Activated CD4-positive, alpha-beta memory T cell treated with anti-CD3 and anti-CD28 coated beads for 36 hours (primary cell): ENCODE measurements at regions of chr14 and their contacts with region 1.

Region 1: DNA sequence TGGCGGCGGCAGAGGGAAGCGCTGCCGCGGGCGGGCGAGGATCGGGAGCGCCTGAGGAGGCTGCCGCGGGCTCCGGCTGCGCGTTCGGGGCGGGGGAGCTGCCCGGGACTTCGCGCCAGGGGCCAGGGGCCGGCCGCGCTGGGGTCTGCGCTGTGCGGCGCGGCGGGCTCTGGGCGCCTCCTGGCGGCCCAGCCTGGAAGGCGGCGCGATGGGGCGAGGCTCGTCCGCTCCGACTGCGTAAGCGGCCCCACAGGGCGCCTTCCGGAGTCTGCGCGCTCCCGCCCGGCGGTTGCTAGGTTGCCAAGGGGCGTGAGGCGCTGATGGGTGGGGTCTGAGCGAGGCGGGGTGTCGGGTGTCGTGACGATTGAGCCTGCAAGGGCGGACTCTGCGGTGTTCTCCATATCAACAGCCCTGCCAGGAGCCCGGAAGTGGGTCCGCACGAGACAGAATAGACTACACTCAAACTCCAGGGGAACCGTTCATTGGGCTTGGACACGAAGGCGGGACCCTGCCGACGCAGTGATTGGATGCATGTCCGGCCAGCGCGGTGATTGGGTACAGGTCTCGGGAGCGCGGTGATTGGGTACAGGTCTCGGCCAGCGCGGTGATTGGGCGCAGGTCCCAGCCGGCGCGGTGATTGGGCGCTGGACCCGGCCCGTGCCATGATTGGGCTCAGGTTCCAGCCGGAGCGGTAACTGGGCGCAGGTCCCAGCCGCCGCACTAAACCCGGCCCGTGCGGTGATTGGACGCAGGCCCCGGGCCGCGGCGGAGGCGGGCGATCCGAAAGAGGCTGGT is at the start of gene TEDC1:
- DNase-seq: peak; percentile 100
- H3K4me3 Mint-ChIP-seq: peak within 1 kb of the TSS; percentile 82
- H3K27ac Mint-ChIP-seq: peak within 1 kb of the TSS; percentile 91
- H3K4me1 Mint-ChIP-seq: peaks cover 20% of the 10 kb centered on the region
- H3K27me3 Mint-ChIP-seq: no peaks in the 10 kb centered on the region
- total RNA-seq, gene TEDC1: 40.2 to 44.8 TPM

Region 2: DNA sequence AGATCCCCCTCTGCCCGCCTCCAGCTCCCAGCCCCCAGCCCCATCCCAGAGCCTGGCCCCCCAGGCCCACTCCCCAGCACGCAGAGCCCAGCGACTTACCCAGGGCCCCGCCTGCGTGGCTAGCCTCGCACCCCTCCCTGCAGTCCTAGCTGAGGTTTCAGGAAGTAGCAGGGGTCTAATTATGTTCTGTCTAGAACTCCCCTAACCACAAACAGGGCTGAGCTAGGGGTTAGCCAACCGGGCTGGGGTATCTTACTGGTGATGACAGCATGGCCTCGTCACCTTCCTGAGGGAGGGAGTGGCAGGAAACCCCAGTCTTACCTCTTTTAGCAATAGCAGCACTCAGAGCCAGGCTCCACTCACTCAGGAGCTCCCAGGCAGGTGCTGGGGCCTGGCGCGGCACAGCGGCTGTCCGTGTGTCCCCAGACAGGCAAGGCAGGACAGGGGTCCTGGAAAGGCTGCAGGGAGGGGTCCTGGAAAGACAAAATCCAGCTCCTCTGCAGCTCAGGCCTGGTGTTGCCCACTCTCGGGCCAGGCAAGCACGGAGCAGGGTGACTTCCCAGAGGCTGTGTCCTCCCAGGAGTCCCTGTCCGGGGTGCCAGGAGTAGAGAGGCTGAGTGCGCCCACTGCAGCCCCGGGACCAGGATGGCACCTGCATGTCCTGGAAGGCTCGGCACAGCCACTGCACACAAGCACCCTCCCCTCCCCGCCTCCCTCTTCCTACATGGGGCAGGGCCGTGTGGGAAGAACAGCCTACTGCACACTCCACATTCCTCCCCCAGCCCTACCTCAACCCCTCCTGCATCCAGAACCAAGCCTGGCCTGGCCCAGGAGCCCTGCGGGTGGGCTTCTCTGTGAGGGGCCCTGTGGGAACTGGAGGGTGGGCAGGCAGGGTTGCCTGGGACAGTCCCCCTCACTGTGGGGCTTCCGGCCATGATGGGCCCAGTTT is 425.2 kb before region 1 on chr14 and contains the start of gene GPR132:
- CTCF ChIA-PET with region 1: no interaction called
- POLR2A ChIA-PET with region 1: no interaction called
- intact Hi-C with region 1: loop called (anchors 2 kb)
- DNase-seq: peak; percentile 95
- H3K4me3 Mint-ChIP-seq: peak within 1 kb of the TSS; percentile 94
- H3K27ac Mint-ChIP-seq: peak within 1 kb of the TSS; percentile 86
- H3K4me1 Mint-ChIP-seq: peaks cover 70% of the 10 kb centered on the region
- H3K27me3 Mint-ChIP-seq: no peaks in the 10 kb centered on the region
- total RNA-seq, gene GPR132: 33.4 to 34.2 TPM

Region 3: DNA sequence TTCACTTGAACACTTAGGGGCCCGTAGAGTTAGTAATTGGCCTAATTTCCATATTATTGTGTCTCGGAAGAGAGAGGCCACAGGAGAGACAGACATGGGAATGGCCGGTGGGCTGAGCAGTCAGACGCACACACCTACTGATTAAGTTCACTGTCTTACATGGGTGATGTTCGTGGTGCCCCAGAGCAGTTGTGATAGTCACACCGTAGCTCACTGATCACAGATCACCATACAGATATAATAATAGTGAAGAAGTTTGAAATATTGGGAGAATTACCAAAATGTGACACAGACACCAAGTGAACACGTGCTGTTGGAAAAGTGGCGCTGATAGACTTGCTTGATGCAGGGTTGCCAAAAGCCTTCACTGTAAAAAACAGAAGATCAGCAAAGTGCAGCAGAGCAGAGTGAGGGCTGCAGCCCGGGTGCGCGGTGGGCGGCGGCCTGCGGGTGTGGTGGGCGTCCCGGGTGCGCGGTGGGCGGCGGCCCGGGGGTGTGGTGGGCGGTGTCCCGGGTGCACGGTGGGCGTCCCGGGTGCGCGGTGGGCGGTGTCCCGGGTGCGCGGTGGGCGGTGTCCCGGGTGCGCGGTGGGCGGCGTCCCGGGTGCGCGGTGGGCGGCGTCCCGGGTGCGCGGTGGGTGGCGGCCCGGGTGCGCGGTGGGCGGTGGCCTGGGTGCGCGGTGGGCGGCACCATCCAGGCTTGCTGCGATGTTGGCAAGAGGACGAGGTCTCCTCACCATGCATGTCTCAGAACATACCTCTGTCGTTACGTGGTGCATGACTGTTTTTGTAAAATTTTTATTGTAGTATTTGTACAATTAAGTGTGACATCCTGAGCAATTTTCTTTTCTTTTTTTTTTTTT is 126.7 kb before region 1 on chr14:
- CTCF ChIA-PET with region 1: interaction called, 138 read pairs
- POLR2A ChIA-PET with region 1: no interaction called
- intact Hi-C with region 1: no loop called
- DNase-seq: peak; percentile 36
- H3K4me3 Mint-ChIP-seq: no peak overlapping the region
- H3K27ac Mint-ChIP-seq: no peak overlapping the region
- H3K4me1 Mint-ChIP-seq: peaks cover 9% of the 10 kb centered on the region
- H3K27me3 Mint-ChIP-seq: peaks cover 3% of the 10 kb centered on the region

Region 4: GRCh38 chr14:105398044-105398725 is 92.6 kb before region 1 on chr14 and contains the start of gene TEX22:
- CTCF ChIA-PET with region 1: interaction called, 7 read pairs
- POLR2A ChIA-PET with region 1: interaction called, 3 read pairs
- intact Hi-C with region 1: loop called (anchors 1 kb)
- DNase-seq: peak; percentile 91
- H3K4me3 Mint-ChIP-seq: peak within 1 kb of the TSS; percentile 89
- H3K27ac Mint-ChIP-seq: peak within 1 kb of the TSS; percentile 83
- H3K4me1 Mint-ChIP-seq: peaks cover 12% of the 10 kb centered on the region
- H3K27me3 Mint-ChIP-seq: no peaks in the 10 kb centered on the region
- total RNA-seq, gene TEX22: 0.83 to 0.90 TPM

Region 5: GRCh38 chr14:105455781-105456680 is 34.7 kb before region 1 on chr14:
- CTCF ChIA-PET with region 1: interaction called, 13 read pairs
- POLR2A ChIA-PET with region 1: no interaction called
- intact Hi-C with region 1: no loop called
- DNase-seq: no peak
- H3K4me3 Mint-ChIP-seq: no peak overlapping the region
- H3K27ac Mint-ChIP-seq: no peak overlapping the region
- H3K4me1 Mint-ChIP-seq: no peaks in the 10 kb centered on the region
- H3K27me3 Mint-ChIP-seq: no peaks in the 10 kb centered on the region

Region 6: DNA sequence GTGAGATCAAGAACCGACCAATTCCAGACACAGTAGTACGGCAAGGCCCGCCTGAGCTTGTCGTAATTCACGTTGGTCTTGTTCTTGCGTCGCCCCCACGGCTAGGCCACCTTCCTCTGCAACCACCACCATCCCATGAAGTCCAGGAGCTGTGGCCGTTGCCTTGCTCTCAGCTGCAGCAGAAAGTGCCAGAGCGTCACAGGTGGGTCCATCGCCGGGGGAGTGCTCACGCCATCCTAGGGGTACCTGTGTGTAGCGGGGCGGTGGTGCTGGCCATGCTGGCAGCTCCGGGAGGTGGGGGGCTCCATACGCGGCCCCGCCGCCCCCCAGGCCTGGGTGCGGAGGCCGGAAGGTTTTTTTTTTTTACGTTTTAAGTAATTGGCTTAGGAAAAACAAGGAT is 58.7 kb after region 1 on chr14:
- CTCF ChIA-PET with region 1: no interaction called
- POLR2A ChIA-PET with region 1: no interaction called
- intact Hi-C with region 1: no loop called
- DNase-seq: no peak
- H3K4me3 Mint-ChIP-seq: no peak overlapping the region
- H3K27ac Mint-ChIP-seq: no peak overlapping the region
- H3K4me1 Mint-ChIP-seq: no peaks in the 10 kb centered on the region
- H3K27me3 Mint-ChIP-seq: peaks cover 1% of the 10 kb centered on the region

Region 7: DNA sequence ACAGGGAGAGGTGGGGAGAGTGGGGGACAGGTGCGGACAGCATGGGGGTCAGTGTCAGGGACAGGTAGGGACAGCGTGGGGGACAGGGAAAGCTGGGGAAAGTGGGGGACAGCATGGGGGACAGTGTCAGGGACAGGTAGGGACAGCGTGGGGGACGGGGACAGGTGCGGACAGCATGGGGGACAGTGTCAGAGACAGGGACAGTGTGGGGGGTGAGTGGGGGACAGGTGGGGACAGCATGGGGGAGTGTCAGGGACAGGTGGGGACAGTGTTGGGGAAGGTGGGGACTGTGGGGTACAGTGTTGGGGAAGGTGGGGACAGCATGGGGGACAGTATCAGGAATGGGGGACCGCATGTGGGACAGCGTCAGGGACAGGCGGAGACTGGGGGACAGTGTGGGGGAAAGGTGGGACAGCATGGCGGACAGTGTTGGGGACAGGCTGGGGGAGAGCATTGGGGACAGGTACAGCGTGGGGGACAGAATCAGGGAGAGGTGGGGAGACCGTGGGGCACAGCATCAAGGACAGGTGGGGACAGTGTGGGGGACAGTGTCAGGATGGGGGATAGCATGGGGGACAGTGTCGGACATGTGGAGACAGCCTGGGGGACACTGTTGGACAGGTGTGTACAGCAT is 131.7 kb after region 1 on chr14:
- CTCF ChIA-PET with region 1: no interaction called
- POLR2A ChIA-PET with region 1: no interaction called
- intact Hi-C with region 1: no loop called
- DNase-seq: no peak
- H3K4me3 Mint-ChIP-seq: no peak overlapping the region
- H3K27ac Mint-ChIP-seq: no peak overlapping the region
- H3K4me1 Mint-ChIP-seq: no peaks in the 10 kb centered on the region
- H3K27me3 Mint-ChIP-seq: peaks cover 2% of the 10 kb centered on the region

Region 8: GRCh38 chr14:105999361-106000028 is 508.7 kb after region 1 on chr14:
- CTCF ChIA-PET with region 1: no interaction called
- POLR2A ChIA-PET with region 1: no interaction called
- intact Hi-C with region 1: no loop called
- DNase-seq: peak; percentile 94
- H3K4me3 Mint-ChIP-seq: peak overlapping the region; percentile 52
- H3K27ac Mint-ChIP-seq: peak overlapping the region; percentile 71
- H3K4me1 Mint-ChIP-seq: peaks cover 46% of the 10 kb centered on the region
- H3K27me3 Mint-ChIP-seq: no peaks in the 10 kb centered on the region